AG04450 (cell line): ENCODE measurements at regions of chr4 and their contacts with region 1.

Region 1: GRCh38 chr4:68175562-68176155 is 46.0 kb upstream of the TMPRSS11F start:
- DNase-seq: peak; percentile 20
- H3K4me3 ChIP-seq: no peak overlapping the region
- H3K27ac ChIP-seq: no peak overlapping the region
- H3K27me3 ChIP-seq: no peaks in the 10 kb centered on the region
- CTCF ChIP-seq: peak; percentile 77

Region 2: GRCh38 chr4:67871867-67872266 is 303.8 kb before region 1 on chr4:
- CTCF ChIA-PET with region 1: interaction called, 16 read pairs
- POLR2A ChIA-PET with region 1: no interaction called
- DNase-seq: no peak
- H3K4me3 ChIP-seq: no peak overlapping the region
- H3K27ac ChIP-seq: no peak overlapping the region
- H3K27me3 ChIP-seq: no peaks in the 10 kb centered on the region
- CTCF ChIP-seq: peak; percentile 63

Region 3: GRCh38 chr4:68141852-68142251 is 33.8 kb before region 1 on chr4:
- CTCF ChIA-PET with region 1: no interaction called
- POLR2A ChIA-PET with region 1: no interaction called
- DNase-seq: no peak
- H3K4me3 ChIP-seq: no peak overlapping the region
- H3K27ac ChIP-seq: no peak overlapping the region
- H3K27me3 ChIP-seq: no peaks in the 10 kb centered on the region
- CTCF ChIP-seq: no peak